ENCODE measurements at regions of chr1 and their contacts with region 1.

Region 1: GRCh38 chr1:3856908-3857790 is at the starts of genes CEP104 and DFFB:
- DNase-seq: peak; percentile 94 to 97 (median 96)
- H3K4me3 ChIP-seq: peak within 1 kb of the TSS; percentile 23 to 95 (median 88)
- H3K27ac ChIP-seq: peak within 1 kb of the TSS in 1 of 2 experiments; percentile 71
- H3K4me1 ChIP-seq: peaks cover 3 to 28% (median 23%) of the 10 kb centered on the region in 4 experiments
- H3K27me3 ChIP-seq: no peaks in the 10 kb centered on the region

Region 2: GRCh38 chr1:3772027-3772714 is 85.0 kb before region 1 on chr1:
- CTCF ChIA-PET with region 1: no interaction called
- POLR2A ChIA-PET with region 1: no interaction called
- DNase-seq: peak; percentile 84 to 93 (median 93)
- H3K4me3 ChIP-seq: peak overlapping the region; percentile 34 to 80 (median 60)
- H3K27ac ChIP-seq: no peak overlapping the region
- H3K4me1 ChIP-seq: peaks cover 0 to 51% (median 39%) of the 10 kb centered on the region in 4 experiments
- H3K27me3 ChIP-seq: no peaks in the 10 kb centered on the region

Region 3: GRCh38 chr1:3892748-3893147 is 35.6 kb after region 1 on chr1:
- CTCF ChIA-PET with region 1: interaction called, 18 read pairs
- POLR2A ChIA-PET with region 1: no interaction called
- DNase-seq: no peak
- H3K4me3 ChIP-seq: no peak overlapping the region
- H3K27ac ChIP-seq: no peak overlapping the region
- H3K4me1 ChIP-seq: peaks cover 9 to 28% (median 22%) of the 10 kb centered on the region in 4 experiments
- H3K27me3 ChIP-seq: no peaks in the 10 kb centered on the region

Region 4: GRCh38 chr1:3900119-3900968 is 43.2 kb after region 1 on chr1 and contains the start of gene C1orf174:
- CTCF ChIA-PET with region 1: interaction called, 18 read pairs
- POLR2A ChIA-PET with region 1: interaction called, 5 read pairs
- DNase-seq: peak; percentile 100
- H3K4me3 ChIP-seq: peak within 1 kb of the TSS; percentile 76 to 95 (median 88)
- H3K27ac ChIP-seq: peak within 1 kb of the TSS; percentile 85 to 95
- H3K4me1 ChIP-seq: peaks cover 1 to 39% (median 36%) of the 10 kb centered on the region in 4 experiments
- H3K27me3 ChIP-seq: no peaks in the 10 kb centered on the region

Region 5: GRCh38 chr1:4027492-4028138 is 170.5 kb after region 1 on chr1:
- CTCF ChIA-PET with region 1: no interaction called
- POLR2A ChIA-PET with region 1: no interaction called
- DNase-seq: peak; percentile 6 to 35 (median 6)
- H3K4me3 ChIP-seq: no peak overlapping the region
- H3K27ac ChIP-seq: no peak overlapping the region
- H3K4me1 ChIP-seq: no peaks in the 10 kb centered on the region
- H3K27me3 ChIP-seq: peaks cover 0 to 35% (median 0%) of the 10 kb centered on the region in 5 experiments

Measured in common myeloid progenitor, CD34-positive (primary cell).